ENCODE measurements at regions of chr15 and their contacts with region 1.

Region 1: DNA sequence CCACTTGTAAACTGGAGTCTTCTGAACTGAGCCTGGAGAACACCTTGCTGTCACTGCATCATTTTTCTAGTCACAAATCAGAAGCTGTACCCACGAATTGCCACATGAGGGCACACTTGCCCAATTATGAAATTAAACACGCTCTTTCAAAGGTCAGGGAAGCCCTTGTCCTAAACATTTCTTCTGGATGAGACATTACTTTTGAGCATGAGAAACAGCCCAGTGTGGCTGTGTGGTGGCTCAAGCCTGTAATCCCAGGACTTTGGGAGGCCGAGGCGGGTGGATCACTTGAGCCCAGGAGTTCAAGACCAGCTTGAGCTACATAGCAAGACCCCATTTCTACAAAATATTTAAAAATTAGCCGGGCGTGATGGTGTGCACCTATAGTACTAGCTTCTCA is 27.5 kb upstream of the CFAP161 start:
- DNase-seq: no peak
- ATAC-seq: peak; percentile 66

Region 2: DNA sequence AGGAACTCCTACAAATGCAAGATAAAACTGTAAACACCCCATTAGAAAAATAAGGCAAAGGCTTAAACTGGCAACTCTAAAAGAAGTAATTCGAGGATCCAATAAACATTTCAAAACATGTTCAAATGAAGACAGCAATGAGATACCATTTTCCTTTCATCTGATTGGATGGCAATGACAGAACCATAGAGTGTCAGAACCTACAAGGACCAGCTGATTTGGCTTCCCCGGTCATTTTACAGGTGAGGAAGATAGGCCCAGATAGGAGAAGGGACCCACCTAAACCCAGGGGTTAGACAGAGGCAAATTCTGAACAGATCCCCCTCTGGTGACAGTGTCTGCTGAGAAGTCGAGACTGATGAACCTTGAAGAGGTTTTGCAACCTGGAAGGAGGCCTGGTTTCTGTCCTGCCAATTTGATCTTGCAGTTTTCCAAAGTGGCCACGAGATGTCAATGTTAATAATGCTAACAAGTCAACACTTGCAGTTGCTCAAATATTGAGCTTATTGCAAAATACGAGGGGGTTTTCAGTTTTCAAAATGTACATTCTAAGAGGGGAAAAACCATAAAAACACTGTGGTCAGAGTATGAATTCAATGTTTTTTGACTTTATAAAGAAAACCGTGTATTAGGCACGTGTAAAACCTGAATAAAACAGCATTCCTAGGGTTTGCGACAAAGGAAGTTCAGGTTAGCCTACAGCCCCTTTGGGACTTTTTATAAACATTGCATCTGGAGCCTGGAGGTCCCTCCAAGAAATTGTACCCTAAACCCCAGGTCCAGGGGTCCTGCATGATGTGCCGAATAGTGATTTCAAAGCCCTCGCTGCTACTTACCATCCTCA is 49.0 kb after region 1 on chr15:
- intact Hi-C with region 1: loop called (anchors 5 kb)
- DNase-seq: no peak
- ATAC-seq: peak; percentile 43

Region 3: DNA sequence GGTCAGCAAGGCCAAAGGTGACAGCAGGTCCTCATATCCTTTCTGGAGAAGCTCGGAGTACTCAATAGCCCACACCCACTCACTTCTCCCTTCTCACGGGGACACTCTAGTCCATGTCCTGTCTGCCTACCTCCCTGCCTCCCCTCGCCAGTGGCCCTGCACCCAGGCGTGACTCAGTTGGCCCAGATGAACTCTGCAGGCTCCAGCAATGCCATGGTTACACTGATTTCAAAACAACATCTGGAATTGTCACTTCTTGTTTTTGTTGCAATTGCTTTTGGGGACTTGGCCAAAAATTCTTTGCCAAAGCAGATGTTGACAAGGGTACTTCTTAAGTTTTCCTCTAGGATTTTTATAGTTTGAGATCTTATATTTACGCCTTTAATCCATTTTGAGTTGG is 103.1 kb after region 1 on chr15:
- intact Hi-C with region 1: no loop called
- DNase-seq: no peak
- ATAC-seq: peak; percentile 83

Measured in Right ventricle myocardium inferior (tissue), 1 donor.